ENCODE measurements at regions of chr12 and their contacts with region 1.

Region 1: GRCh38 chr12:49347384-49348237 is 923 bp downstream of the DNAJC22 start:
- DNase-seq: no peak
- ATAC-seq: peak; percentile 84
- H3K4me3 ChIP-seq: peak overlapping the region; percentile 31 to 63
- H3K27ac ChIP-seq: no peak overlapping the region
- H3K4me1 ChIP-seq: peaks cover 20% of the 10 kb centered on the region
- H3K27me3 ChIP-seq: no peaks in the 10 kb centered on the region; the same call in 1 of the 2 replicates
- CTCF ChIP-seq: peak; percentile 98

Region 2: GRCh38 chr12:49288412-49288853 is 59.2 kb before region 1 on chr12:
- CTCF ChIA-PET with region 1: interaction called, 20 read pairs
- POLR2A ChIA-PET with region 1: no interaction called
- in situ Hi-C with region 1: no loop called
- intact Hi-C with region 1: no loop called
- DNase-seq: no peak
- ATAC-seq: peak; percentile 70; the same call in 1 of the 2 replicates
- H3K4me3 ChIP-seq: no peak overlapping the region
- H3K27ac ChIP-seq: no peak overlapping the region
- H3K4me1 ChIP-seq: no peaks in the 10 kb centered on the region
- H3K27me3 ChIP-seq: no peaks in the 10 kb centered on the region
- CTCF ChIP-seq: peak; percentile 91

Region 3: DNA sequence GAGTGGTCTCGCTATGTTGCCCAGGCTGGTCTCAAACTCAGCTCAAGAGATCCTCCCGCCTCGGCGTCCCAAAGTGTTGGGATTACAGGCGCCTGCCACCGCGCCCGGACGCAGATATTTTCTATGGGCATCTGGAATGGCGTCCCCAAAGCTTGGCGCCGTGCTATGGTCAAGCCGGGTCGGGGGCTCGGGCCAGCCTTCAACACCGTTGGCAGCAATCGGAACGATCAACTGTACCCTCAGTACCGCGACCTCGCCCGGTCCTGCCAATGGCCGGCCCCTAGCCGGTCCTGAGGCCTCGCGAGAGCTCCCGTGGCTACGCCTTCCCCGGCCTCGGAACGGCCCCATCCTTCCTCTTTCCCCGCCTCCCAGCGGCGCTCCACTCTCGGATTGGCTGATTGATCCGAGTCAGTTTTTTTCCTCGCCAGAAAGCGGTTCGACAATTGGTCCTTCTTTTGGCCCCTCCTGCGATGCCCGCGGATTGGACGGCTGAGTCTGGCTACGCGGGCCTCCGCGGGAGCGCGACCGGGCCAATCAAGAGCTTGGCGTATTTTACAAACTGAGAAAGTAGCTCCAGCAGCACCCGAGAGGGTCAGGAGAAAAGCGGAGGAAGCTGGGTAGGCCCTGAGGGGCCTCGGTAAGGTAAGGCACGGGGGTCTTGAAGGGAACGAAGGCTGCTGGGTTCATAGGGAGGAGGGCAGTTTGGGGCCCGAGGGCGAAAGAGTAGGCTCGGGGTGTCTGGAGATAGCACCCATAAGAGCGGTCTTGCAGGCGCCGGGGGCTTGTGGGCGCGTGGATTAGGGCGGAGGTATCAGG is 24.7 kb before region 1 on chr12 and contains the start of gene TROAP:
- CTCF ChIA-PET with region 1: interaction called, 11 read pairs
- POLR2A ChIA-PET with region 1: no interaction called
- in situ Hi-C with region 1: no loop called
- intact Hi-C with region 1: no loop called
- DNase-seq: peak; percentile 98
- ATAC-seq: peak; percentile 99
- H3K4me3 ChIP-seq: peak within 1 kb of the TSS; percentile 82 to 98
- H3K27ac ChIP-seq: peak within 1 kb of the TSS; percentile 90
- H3K4me1 ChIP-seq: peaks cover 5% of the 10 kb centered on the region; the same call in 1 of the 2 replicates
- H3K27me3 ChIP-seq: no peaks in the 10 kb centered on the region
- CTCF ChIP-seq: no peak
- total RNA-seq, gene TROAP: 50.0 TPM

Region 4: GRCh38 chr12:49331380-49332222 is 16.0 kb before region 1 on chr12:
- CTCF ChIA-PET with region 1: interaction called, 19 read pairs
- POLR2A ChIA-PET with region 1: interaction called, 6 read pairs
- in situ Hi-C with region 1: no loop called
- intact Hi-C with region 1: no loop called
- DNase-seq: no peak
- ATAC-seq: peak; percentile 83
- H3K4me3 ChIP-seq: no peak overlapping the region
- H3K27ac ChIP-seq: no peak overlapping the region
- H3K4me1 ChIP-seq: peaks cover 6% of the 10 kb centered on the region; the same call in 1 of the 2 replicates
- H3K27me3 ChIP-seq: no peaks in the 10 kb centered on the region
- CTCF ChIP-seq: peak; percentile 90

Region 5: GRCh38 chr12:49336645-49337584 is 10.7 kb before region 1 on chr12 and contains the start of gene C1QL4:
- CTCF ChIA-PET with region 1: interaction called, 19 read pairs
- POLR2A ChIA-PET with region 1: interaction called, 5 read pairs
- in situ Hi-C with region 1: no loop called
- intact Hi-C with region 1: no loop called
- DNase-seq: no peak
- ATAC-seq: peak; percentile 83
- H3K4me3 ChIP-seq: peak within 1 kb of the TSS; percentile 56 to 65
- H3K27ac ChIP-seq: no peak within 1 kb of the TSS
- H3K4me1 ChIP-seq: peaks cover 8% of the 10 kb centered on the region; the same call in 1 of the 2 replicates
- H3K27me3 ChIP-seq: no peaks in the 10 kb centered on the region
- CTCF ChIP-seq: peak; percentile 99
- total RNA-seq, gene C1QL4: 2.1 TPM

Region 6: GRCh38 chr12:49366652-49367380 is 19.2 kb after region 1 on chr12:
- CTCF ChIA-PET with region 1: interaction called, 15 read pairs
- POLR2A ChIA-PET with region 1: interaction called, 9 read pairs
- in situ Hi-C with region 1: no loop called
- intact Hi-C with region 1: no loop called
- DNase-seq: no peak
- ATAC-seq: peak; percentile 94
- H3K4me3 ChIP-seq: peak overlapping the region; percentile 78 to 82
- H3K27ac ChIP-seq: peak overlapping the region; percentile 92
- H3K4me1 ChIP-seq: peaks cover 18% of the 10 kb centered on the region
- H3K27me3 ChIP-seq: no peaks in the 10 kb centered on the region
- CTCF ChIP-seq: peak; percentile 44; the same call in 1 of the 2 replicates

Region 7: GRCh38 chr12:49693994-49694393 is 346.4 kb after region 1 on chr12:
- CTCF ChIA-PET with region 1: no interaction called
- POLR2A ChIA-PET with region 1: interaction called, 14 read pairs
- in situ Hi-C with region 1: no loop called
- intact Hi-C with region 1: no loop called
- DNase-seq: no peak
- ATAC-seq: no peak
- H3K4me3 ChIP-seq: no peak overlapping the region
- H3K27ac ChIP-seq: no peak overlapping the region
- H3K4me1 ChIP-seq: no peaks in the 10 kb centered on the region; the same call in 1 of the 2 replicates
- H3K27me3 ChIP-seq: no peaks in the 10 kb centered on the region
- CTCF ChIP-seq: no peak

Measured in Panc1 (cell line).